ENCODE measurements at regions of chr22 and their contacts with region 1.

Region 1: DNA sequence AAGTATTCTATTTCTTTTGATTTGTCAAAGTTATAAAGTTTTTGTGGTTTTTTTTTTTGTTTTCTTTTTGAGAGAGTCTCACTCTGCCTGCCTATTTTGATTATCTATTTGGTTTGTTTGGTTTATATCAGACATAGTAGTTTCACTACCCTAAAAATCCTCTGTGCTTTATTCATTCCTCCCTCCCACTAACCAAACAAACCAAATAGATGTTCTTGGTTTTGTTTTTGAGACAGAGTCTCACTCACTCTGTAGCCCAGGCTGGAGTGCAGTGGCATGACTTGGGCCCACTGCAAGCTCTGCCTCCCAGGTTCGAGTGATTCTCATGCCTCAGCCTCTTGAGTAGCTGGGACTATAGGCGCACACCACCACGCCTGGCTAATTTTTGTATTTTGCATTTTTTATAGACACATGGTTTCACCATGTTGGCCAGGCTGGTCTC is 67.9 kb downstream of the ENTHD1 start:
- DNase-seq: peak; percentile 20
- ATAC-seq: peak; percentile 95
- H3K4me3 Mint-ChIP-seq: peak overlapping the region; percentile 75
- H3K27ac Mint-ChIP-seq: peak overlapping the region; percentile 87
- H3K4me1 Mint-ChIP-seq: peaks cover 48% of the 10 kb centered on the region
- H3K27me3 Mint-ChIP-seq: no peaks in the 10 kb centered on the region
- CTCF ChIP-seq: no peak

Region 2: DNA sequence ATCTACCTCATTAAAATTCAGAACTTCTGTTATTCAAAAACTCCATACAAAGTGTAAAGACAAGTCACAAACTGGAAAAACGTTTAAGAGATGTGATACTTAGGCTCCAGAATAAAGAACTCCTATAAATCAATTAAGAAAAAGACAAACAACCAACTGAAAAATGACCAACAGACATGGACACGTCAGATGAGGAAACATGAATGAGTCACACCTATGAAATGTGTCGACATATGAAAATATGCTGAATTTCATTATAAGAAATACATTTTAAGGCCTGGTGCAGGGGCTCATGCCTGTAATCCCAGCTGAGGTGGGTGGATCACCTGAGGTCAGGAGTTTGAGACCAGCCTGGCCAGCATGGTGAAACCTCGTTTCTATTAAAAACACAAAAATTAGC is 10.8 kb before region 1 on chr22:
- CTCF ChIA-PET with region 1: no interaction called
- POLR2A ChIA-PET with region 1: no interaction called
- intact Hi-C with region 1: no loop called
- DNase-seq: no peak
- ATAC-seq: no peak
- H3K4me3 Mint-ChIP-seq: no peak overlapping the region
- H3K27ac Mint-ChIP-seq: no peak overlapping the region
- H3K4me1 Mint-ChIP-seq: peaks cover 12% of the 10 kb centered on the region
- H3K27me3 Mint-ChIP-seq: peaks cover 4% of the 10 kb centered on the region
- CTCF ChIP-seq: no peak

Region 3: GRCh38 chr22:39839917-39840510 is 14.3 kb after region 1 on chr22:
- CTCF ChIA-PET with region 1: no interaction called
- POLR2A ChIA-PET with region 1: interaction called, 5 read pairs
- intact Hi-C with region 1: loop called (anchors 2 kb)
- DNase-seq: no peak
- ATAC-seq: peak; percentile 52
- H3K4me3 Mint-ChIP-seq: peak overlapping the region; percentile 60
- H3K27ac Mint-ChIP-seq: peak overlapping the region; percentile 68
- H3K4me1 Mint-ChIP-seq: peaks cover 44% of the 10 kb centered on the region
- H3K27me3 Mint-ChIP-seq: no peaks in the 10 kb centered on the region
- CTCF ChIP-seq: no peak

Measured in activated B cell treated with CpG ODN at 0.5 μM for 24 hours (primary cell).